Endothelial cell of umbilical vein (primary cell): ENCODE measurements at regions of chr7 and their contacts with region 1.

Region 1: GRCh38 chr7:64562626-64563275 is at the start of gene ZNF680:
- DNase-seq: peak; percentile 96
- H3K4me3 ChIP-seq: peak within 1 kb of the TSS; percentile 70 to 90 (median 86)
- H3K27ac ChIP-seq: peak within 1 kb of the TSS; percentile 89
- H3K4me1 ChIP-seq: no peaks in the 10 kb centered on the region
- H3K27me3 ChIP-seq: no peaks in the 10 kb centered on the region
- CTCF ChIP-seq: no peak
- POLR2A ChIP-seq: peak; percentile 68
- total RNA-seq, gene ZNF680: 10.8 and 11.5 TPM in 2 replicates

Region 2: GRCh38 chr7:64266341-64266919 is 296.3 kb before region 1 on chr7:
- CTCF ChIA-PET with region 1: no interaction called
- POLR2A ChIA-PET with region 1: no interaction called
- dilution Hi-C with region 1: no loop called
- intact Hi-C with region 1: no loop called
- DNase-seq: no peak
- H3K4me3 ChIP-seq: no peak overlapping the region
- H3K27ac ChIP-seq: no peak overlapping the region
- H3K4me1 ChIP-seq: no peaks in the 10 kb centered on the region
- H3K27me3 ChIP-seq: no peaks in the 10 kb centered on the region
- CTCF ChIP-seq: no peak
- POLR2A ChIP-seq: no peak

Region 3: DNA sequence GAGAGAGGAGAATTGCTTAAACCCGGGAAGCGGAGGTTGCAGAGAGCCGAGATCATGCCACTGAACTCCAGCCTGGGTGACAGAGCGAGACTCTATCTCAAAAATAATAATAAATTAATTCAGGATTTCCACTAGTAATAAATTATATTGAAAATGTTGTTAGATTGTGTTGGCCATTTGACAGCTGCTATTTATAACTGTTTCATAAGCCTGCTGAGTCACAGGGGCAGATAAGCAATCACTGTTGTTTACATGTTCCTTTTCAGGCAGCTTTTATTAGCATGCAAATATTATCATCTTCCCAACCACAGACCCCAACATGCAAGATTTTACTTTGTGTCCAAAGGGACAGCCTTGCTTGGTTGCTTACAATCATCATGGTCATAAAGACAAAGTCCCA is 181.9 kb after region 1 on chr7:
- CTCF ChIA-PET with region 1: no interaction called
- POLR2A ChIA-PET with region 1: no interaction called
- dilution Hi-C with region 1: no loop called
- intact Hi-C with region 1: no loop called
- DNase-seq: no peak
- H3K4me3 ChIP-seq: no peak overlapping the region
- H3K27ac ChIP-seq: no peak overlapping the region
- H3K4me1 ChIP-seq: no peaks in the 10 kb centered on the region
- H3K27me3 ChIP-seq: no peaks in the 10 kb centered on the region
- CTCF ChIP-seq: no peak
- POLR2A ChIP-seq: no peak

Region 4: DNA sequence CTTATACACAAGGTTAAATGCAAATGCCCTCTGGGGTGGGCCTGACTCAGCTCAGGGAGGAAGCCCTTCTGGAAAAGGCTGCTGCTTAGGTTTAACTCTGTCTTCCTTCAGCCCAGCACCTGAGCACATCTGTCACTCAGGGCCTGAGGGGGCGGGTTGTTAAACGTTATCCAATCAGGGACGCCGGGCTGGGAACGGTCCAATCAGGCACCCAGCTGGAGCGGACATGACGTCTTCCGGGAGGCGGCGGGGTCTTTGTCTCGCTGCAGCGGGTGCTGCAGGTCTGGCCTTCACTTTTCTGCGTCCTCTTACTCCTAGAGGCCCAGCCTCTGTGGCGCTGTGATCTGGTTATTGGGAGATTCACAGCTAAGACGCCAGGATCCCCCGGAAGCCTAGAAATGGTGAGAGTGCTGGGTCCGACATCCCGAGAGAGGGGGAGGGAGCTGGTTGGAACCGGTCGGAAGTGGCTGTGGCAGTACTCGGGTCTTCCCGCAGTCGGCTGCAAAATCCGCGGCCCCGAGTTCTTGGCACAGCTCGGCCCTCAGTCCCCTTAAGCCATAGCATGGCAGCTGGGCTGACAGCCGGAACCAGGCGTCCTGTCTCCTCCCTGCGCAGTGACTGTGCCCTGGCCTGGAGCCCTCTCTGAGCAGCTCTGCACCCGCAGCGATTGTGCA is 231.6 kb after region 1 on chr7 and contains the start of gene ZNF138:
- CTCF ChIA-PET with region 1: no interaction called
- POLR2A ChIA-PET with region 1: no interaction called
- dilution Hi-C with region 1: no loop called
- intact Hi-C with region 1: loop called (anchors 5 kb)
- DNase-seq: peak; percentile 95
- H3K4me3 ChIP-seq: peak within 1 kb of the TSS; percentile 80 to 92 (median 90)
- H3K27ac ChIP-seq: peak within 1 kb of the TSS; percentile 78
- H3K4me1 ChIP-seq: peaks cover 3% of the 10 kb centered on the region
- H3K27me3 ChIP-seq: no peaks in the 10 kb centered on the region
- CTCF ChIP-seq: no peak
- POLR2A ChIP-seq: peak; percentile 60
- total RNA-seq, gene ZNF138: 3.3 and 4.4 TPM in 2 replicates